Activated CD8-positive, alpha-beta T cell treated with anti-CD3 and anti-CD28 coated beads for 36 hours (primary cell): ENCODE measurements at regions of chr15 and their contacts with region 1.

Region 1: DNA sequence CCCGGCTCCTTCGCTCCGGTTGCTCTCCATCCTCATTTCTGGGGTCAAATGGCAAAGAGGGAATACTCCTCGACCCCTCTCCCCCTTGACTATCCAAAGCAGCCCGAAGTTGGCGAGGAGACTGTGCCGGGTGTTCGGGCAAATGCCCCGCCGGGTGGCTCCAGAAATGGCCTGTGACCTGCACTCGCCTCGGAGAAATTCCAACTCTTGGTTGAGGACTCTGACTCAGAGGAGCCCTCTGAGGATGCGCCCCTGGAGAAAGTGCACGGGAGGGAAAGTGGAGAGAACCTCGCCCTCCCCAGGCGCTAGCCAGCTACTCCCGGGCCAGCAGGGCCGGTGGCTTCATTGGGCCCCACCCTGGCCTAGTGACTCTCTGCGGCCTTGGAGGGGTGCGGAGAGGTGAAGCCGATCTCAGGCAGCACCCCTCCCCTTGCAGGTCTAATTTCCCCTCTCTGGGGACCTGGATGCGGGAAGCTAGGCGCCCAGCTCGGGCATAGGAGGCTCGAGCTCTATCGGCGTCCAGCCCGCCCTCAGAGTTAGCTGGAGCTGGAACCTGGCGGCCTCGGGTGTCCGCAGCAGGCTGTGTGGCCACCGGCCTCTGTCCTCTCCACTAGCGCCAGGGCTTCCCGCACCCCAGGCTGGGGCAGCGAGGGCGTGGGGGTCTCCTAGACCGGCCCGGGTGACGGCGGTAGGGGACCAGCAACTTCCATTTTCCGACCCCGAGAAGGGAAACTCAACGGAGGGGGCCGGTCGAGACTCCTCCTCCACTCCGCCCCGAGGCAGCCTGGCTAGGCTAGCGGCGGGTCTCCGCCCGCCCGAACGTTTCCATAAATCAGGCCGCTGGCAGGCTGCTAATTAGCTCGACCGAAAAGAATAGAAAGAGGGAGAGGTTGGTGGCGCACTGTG is 29.4 kb downstream of the NR2F2 start:
- DNase-seq: no peak
- ATAC-seq: no peak
- H3K4me3 Mint-ChIP-seq: no peak overlapping the region
- H3K27ac Mint-ChIP-seq: no peak overlapping the region
- H3K4me1 Mint-ChIP-seq: peaks cover 19% of the 10 kb centered on the region
- H3K27me3 Mint-ChIP-seq: peaks cover 69% of the 10 kb centered on the region
- CTCF ChIP-seq: no peak

Region 2: DNA sequence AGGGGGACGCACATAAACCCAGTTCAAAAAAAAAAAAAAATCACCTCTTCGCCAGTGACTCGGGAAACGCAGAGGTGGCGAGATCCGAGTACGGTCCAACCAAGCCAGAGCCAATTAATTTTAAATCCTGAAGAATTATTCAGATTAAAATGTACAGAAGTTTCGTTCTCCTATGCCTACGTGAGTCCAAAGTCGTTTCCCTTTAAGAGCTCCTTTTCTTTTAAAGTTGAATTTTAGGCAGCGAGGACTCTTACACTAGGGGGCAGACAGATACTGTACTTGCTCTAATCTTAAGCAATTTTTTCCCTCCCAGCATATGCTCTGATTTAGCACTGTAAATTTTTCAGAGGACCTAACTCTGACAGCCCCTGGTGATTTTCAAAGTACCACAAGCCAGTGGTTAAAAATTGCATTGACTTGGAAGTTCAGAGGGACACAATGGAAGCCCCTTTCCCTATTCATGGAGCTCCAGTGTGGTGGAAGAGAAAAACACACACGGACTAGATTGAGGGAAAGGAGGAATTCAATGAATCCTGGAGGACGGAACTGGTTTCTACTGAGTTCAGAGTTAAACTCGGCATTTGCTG is 32.6 kb before region 1 on chr15:
- CTCF ChIA-PET with region 1: interaction called, 4 read pairs
- POLR2A ChIA-PET with region 1: interaction called, 3 read pairs
- intact Hi-C with region 1: loop called (anchors 5 kb)
- DNase-seq: no peak
- ATAC-seq: peak; percentile 48
- H3K4me3 Mint-ChIP-seq: no peak overlapping the region
- H3K27ac Mint-ChIP-seq: no peak overlapping the region
- H3K4me1 Mint-ChIP-seq: peaks cover 11% of the 10 kb centered on the region
- H3K27me3 Mint-ChIP-seq: peaks cover 77% of the 10 kb centered on the region
- CTCF ChIP-seq: peak; percentile 40

Region 3: DNA sequence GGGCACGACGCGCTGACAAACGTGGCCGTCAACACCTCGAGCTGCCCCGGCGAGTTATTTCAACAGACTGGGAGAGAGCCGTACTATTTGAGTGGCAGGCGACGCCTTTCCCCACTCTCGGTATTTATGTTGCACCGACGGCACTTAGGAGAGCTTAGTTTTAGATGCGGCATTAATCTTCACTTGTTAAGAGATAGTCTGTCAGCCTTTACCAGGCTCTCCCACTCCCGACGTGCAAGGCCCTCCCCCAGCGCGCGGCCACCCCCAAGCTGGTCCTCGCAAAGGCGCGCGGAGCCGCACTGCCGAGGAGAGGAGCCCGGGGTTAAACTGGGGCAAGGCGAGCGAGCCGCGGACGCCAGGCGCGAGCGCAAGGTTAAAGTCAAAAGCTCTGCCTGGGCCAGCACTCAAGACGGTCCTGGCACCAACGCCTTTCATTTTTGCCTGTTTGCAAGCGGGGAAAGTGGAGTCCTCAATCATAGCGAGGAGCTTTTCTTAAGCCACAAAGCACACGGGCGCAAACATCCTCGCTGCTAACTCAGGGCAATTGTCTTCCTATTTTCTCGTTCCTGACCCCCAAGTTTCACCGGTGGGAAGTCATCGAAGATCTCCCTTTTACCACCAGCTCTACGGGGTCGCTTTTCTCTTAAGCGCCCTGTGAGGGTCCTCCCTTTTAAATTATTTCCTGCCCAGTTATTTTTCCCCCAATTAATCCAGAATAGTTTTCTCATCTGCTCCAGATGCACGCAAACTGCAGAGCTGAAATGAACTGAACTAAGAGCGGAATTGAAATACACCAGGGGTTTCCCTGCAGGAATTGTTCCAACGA is 57.3 kb after region 1 on chr15:
- CTCF ChIA-PET with region 1: interaction called, 5 read pairs
- POLR2A ChIA-PET with region 1: no interaction called
- intact Hi-C with region 1: loop called (anchors 5 kb)
- DNase-seq: no peak
- ATAC-seq: no peak
- H3K4me3 Mint-ChIP-seq: no peak overlapping the region
- H3K27ac Mint-ChIP-seq: no peak overlapping the region
- H3K4me1 Mint-ChIP-seq: no peaks in the 10 kb centered on the region
- H3K27me3 Mint-ChIP-seq: peaks cover 68% of the 10 kb centered on the region
- CTCF ChIP-seq: no peak